ENCODE measurements at regions of chr2 and their contacts with region 1.

Region 1: GRCh38 chr2:57759822-57760300 is 286.7 kb upstream of the VRK2 start:
- DNase-seq: peak; percentile 87
- H3K4me3 ChIP-seq: peak overlapping the region in 2 of 4 donors; percentile 25 to 40
- H3K27ac ChIP-seq: no peak overlapping the region
- H3K4me1 ChIP-seq: peaks cover 0 to 10% (median 8%) of the 10 kb centered on the region in 4 donors
- H3K27me3 ChIP-seq: no peaks in the 10 kb centered on the region
- CTCF ChIP-seq: peak; percentile 75 to 95 (median 93)
- EP300 ChIP-seq: no peak
- POLR2A ChIP-seq: no peak

Region 2: DNA sequence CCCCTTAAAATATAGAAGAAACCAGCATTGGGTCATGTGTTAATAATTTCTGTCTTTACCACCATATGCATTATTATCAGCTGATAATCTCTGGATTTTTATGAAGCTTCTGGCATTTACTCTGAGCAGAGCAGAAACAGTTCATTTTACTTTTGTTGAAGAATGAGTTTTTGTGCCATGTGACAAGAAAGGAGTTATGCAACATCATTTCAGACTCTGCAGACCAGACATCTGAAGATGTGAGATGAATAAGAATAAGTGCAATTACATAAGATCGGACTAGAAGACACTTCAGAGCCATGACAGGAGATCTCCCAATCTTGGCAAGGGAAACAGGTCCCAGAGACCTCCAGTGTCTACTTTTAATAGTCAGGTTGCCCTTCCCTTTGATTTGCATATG is 582.7 kb before region 1 on chr2:
- in situ Hi-C with region 1: no loop called
- intact Hi-C with region 1: loop called (anchors 5 kb)
- DNase-seq: no peak
- H3K4me3 ChIP-seq: no peak overlapping the region
- H3K27ac ChIP-seq: no peak overlapping the region
- H3K4me1 ChIP-seq: no peaks in the 10 kb centered on the region
- H3K27me3 ChIP-seq: no peaks in the 10 kb centered on the region
- CTCF ChIP-seq: no peak
- EP300 ChIP-seq: no peak
- POLR2A ChIP-seq: no peak

Region 3: DNA sequence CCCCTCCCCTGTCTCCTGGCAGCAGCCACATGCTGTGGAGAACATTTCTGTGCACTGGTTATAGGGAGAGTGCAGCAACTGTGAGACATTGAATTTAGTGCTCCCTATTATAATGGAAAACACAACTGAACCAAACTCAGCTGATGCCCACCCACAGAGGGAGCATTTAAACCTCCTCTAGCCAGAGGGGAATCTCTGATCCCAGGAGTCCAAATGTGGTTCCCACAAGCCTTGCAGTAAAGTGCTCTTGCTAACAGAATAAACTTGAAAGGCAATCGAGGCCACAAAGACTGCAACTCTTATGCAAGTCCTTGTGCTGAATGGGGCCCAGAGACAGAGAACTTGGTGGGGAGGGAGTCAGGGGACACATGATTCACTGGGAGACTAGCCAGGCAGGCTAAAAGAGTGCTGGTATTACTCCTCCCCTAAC is 352.1 kb before region 1 on chr2:
- in situ Hi-C with region 1: no loop called
- intact Hi-C with region 1: no loop called
- DNase-seq: no peak
- H3K4me3 ChIP-seq: no peak overlapping the region
- H3K27ac ChIP-seq: no peak overlapping the region
- H3K4me1 ChIP-seq: no peaks in the 10 kb centered on the region
- H3K27me3 ChIP-seq: no peaks in the 10 kb centered on the region
- CTCF ChIP-seq: no peak
- EP300 ChIP-seq: no peak
- POLR2A ChIP-seq: no peak

Region 4: GRCh38 chr2:58448065-58448507 is 688.2 kb after region 1 on chr2:
- in situ Hi-C with region 1: loop called in 1 of 4 experiments (anchors 25 kb)
- intact Hi-C with region 1: no loop called
- DNase-seq: peak; percentile 55
- H3K4me3 ChIP-seq: no peak overlapping the region
- H3K27ac ChIP-seq: no peak overlapping the region
- H3K4me1 ChIP-seq: no peaks in the 10 kb centered on the region
- H3K27me3 ChIP-seq: no peaks in the 10 kb centered on the region
- CTCF ChIP-seq: peak; percentile 25 to 42 (median 25)
- EP300 ChIP-seq: no peak
- POLR2A ChIP-seq: no peak

Measured in transverse colon (tissue), 4 donors.